Naive thymus-derived CD8-positive, alpha-beta T cell (primary cell): ENCODE measurements at regions of chr10 and their contacts with region 1.

Region 1: GRCh38 chr10:70146489-70147258 is at the start of gene TYSND1:
- DNase-seq: peak; percentile 81 to 97 (median 91)
- ATAC-seq: peak; percentile 75 to 81
- H3K4me3 Mint-ChIP-seq: peak within 1 kb of the TSS; percentile 84 to 93 (median 90)
- H3K27ac Mint-ChIP-seq: peak within 1 kb of the TSS; percentile 82 to 97 (median 95)
- H3K4me1 Mint-ChIP-seq: peaks cover 19 to 51% (median 41%) of the 10 kb centered on the region in 4 donors
- H3K27me3 Mint-ChIP-seq: no peaks in the 10 kb centered on the region
- polyA plus RNA-seq, gene TYSND1: 23.0 to 28.8 (median 24.3) TPM

Region 2: GRCh38 chr10:70093335-70093944 is 53.2 kb before region 1 on chr10:
- POLR2A ChIA-PET with region 1: interaction called, 44 read pairs
- DNase-seq: peak in 4 of 10 donors; percentile 19 to 64 (median 48)
- ATAC-seq: peak; percentile 69 to 70
- H3K4me3 Mint-ChIP-seq: peak overlapping the region; percentile 78 to 97 (median 94)
- H3K27ac Mint-ChIP-seq: peak overlapping the region; percentile 95 to 99 (median 98)
- H3K4me1 Mint-ChIP-seq: peaks cover 20 to 69% (median 58%) of the 10 kb centered on the region in 4 donors
- H3K27me3 Mint-ChIP-seq: no peaks in the 10 kb centered on the region

Region 3: GRCh38 chr10:70115948-70116682 is 30.6 kb before region 1 on chr10:
- POLR2A ChIA-PET with region 1: interaction called, 22 read pairs
- DNase-seq: peak; percentile 22 to 81 (median 52)
- ATAC-seq: peak; percentile 80 to 92
- H3K4me3 Mint-ChIP-seq: peak overlapping the region in 1 of 10 donors; percentile 3
- H3K27ac Mint-ChIP-seq: peak overlapping the region in 6 of 10 donors; percentile 4 to 88 (median 68)
- H3K4me1 Mint-ChIP-seq: peaks cover 3 to 13% (median 6%) of the 10 kb centered on the region in 4 donors
- H3K27me3 Mint-ChIP-seq: no peaks in the 10 kb centered on the region

Region 4: GRCh38 chr10:70169649-70170364 is 23.1 kb after region 1 on chr10:
- POLR2A ChIA-PET with region 1: interaction called, 157 read pairs
- DNase-seq: peak in 3 of 10 donors; percentile 9 to 19 (median 13)
- ATAC-seq: peak; percentile 26 to 27
- H3K4me3 Mint-ChIP-seq: peak overlapping the region; percentile 87 to 96 (median 92)
- H3K27ac Mint-ChIP-seq: peak overlapping the region; percentile 81 to 99 (median 96)
- H3K4me1 Mint-ChIP-seq: peaks cover 30 to 67% (median 55%) of the 10 kb centered on the region in 4 donors
- H3K27me3 Mint-ChIP-seq: no peaks in the 10 kb centered on the region

Region 5: GRCh38 chr10:70337201-70337651 is 190.6 kb after region 1 on chr10:
- POLR2A ChIA-PET with region 1: no interaction called
- DNase-seq: no peak
- ATAC-seq: no peak
- H3K4me3 Mint-ChIP-seq: no peak overlapping the region
- H3K27ac Mint-ChIP-seq: peak overlapping the region in 1 of 10 donors; percentile 37
- H3K4me1 Mint-ChIP-seq: peaks cover 0 to 9% (median 3%) of the 10 kb centered on the region in 4 donors
- H3K27me3 Mint-ChIP-seq: peaks cover 0 to 6% (median 0%) of the 10 kb centered on the region in 5 donors

Region 6: GRCh38 chr10:70404036-70404786 is 257.5 kb after region 1 on chr10 and contains the start of gene EIF4EBP2:
- POLR2A ChIA-PET with region 1: interaction called, 21 read pairs
- DNase-seq: peak; percentile 95 to 99 (median 98)
- ATAC-seq: peak; percentile 62 to 91
- H3K4me3 Mint-ChIP-seq: peak within 1 kb of the TSS; percentile 92 to 98 (median 96)
- H3K27ac Mint-ChIP-seq: peak within 1 kb of the TSS; percentile 90 to 97 (median 94)
- H3K4me1 Mint-ChIP-seq: peaks cover 31 to 49% (median 46%) of the 10 kb centered on the region in 4 donors
- H3K27me3 Mint-ChIP-seq: no peaks in the 10 kb centered on the region
- polyA plus RNA-seq, gene EIF4EBP2: 44.8 to 62.4 (median 47.7) TPM